ENCODE measurements at regions of chr4 and their contacts with region 1.

Region 1: DNA sequence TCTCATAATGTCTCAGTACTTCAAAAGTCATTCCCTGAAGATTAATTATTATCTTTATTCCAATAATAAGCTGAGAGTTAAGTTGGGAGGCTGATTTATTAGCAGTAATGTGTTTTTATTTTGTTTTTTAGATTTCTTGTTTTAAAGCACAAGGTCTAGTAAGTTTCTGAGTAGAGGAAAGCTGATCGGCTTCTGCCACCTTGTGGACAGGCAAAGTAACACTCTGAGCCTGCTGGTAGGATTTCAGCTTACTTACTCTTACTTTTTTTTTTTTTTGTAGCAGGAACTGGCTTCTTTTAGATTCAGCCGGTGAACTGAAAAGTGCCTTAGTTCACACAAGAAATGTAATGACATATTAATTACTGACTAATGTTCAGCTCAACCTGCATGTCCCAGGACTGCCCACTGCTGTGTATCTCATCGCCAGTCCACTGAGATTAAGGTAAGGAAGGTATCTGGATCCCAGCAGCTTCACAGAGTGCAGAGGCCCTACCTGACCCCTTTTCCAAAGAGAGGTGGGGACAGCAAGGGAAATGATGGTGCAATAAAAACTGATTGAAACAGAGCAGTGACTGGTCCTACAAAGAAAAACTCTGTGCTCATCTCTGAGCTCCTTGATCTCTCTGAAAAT is 126.5 kb downstream of the ADGRA3 start:
- DNase-seq: peak in 7 of 9 donors; percentile 24 to 58 (median 44)
- ATAC-seq: peak; percentile 55
- H3K4me3 ChIP-seq: no peak overlapping the region
- H3K4me3 Mint-ChIP-seq: no peak overlapping the region
- H3K27ac ChIP-seq: no peak overlapping the region
- H3K27ac Mint-ChIP-seq: peak overlapping the region in 1 of 9 donors; percentile 7
- H3K4me1 ChIP-seq: no peaks in the 10 kb centered on the region
- H3K4me1 Mint-ChIP-seq: peaks cover 0 to 4% (median 0%) of the 10 kb centered on the region in 7 donors
- H3K27me3 ChIP-seq: no peaks in the 10 kb centered on the region
- H3K27me3 Mint-ChIP-seq: no peaks in the 10 kb centered on the region

Region 2: GRCh38 chr4:21790438-21791029 is 598.8 kb before region 1 on chr4:
- CTCF ChIA-PET with region 1: interaction called, 16 read pairs
- POLR2A ChIA-PET with region 1: no interaction called
- intact Hi-C with region 1: loop called in 1 of 2 experiments (anchors 1 kb)
- DNase-seq: peak in 3 of 9 donors; percentile 5 to 13 (median 13)
- ATAC-seq: no peak
- H3K4me3 ChIP-seq: no peak overlapping the region
- H3K4me3 Mint-ChIP-seq: no peak overlapping the region
- H3K27ac ChIP-seq: no peak overlapping the region
- H3K27ac Mint-ChIP-seq: no peak overlapping the region
- H3K4me1 ChIP-seq: no peaks in the 10 kb centered on the region
- H3K4me1 Mint-ChIP-seq: peaks cover 0 to 2% (median 0%) of the 10 kb centered on the region in 7 donors
- H3K27me3 ChIP-seq: no peaks in the 10 kb centered on the region
- H3K27me3 Mint-ChIP-seq: peaks cover 0 to 4% (median 0%) of the 10 kb centered on the region in 5 donors

Region 3: GRCh38 chr4:22129454-22130029 is 259.8 kb before region 1 on chr4:
- CTCF ChIA-PET with region 1: no interaction called
- POLR2A ChIA-PET with region 1: no interaction called
- intact Hi-C with region 1: loop called in 1 of 2 experiments (anchors 1 kb)
- DNase-seq: no peak
- ATAC-seq: no peak
- H3K4me3 ChIP-seq: no peak overlapping the region
- H3K4me3 Mint-ChIP-seq: no peak overlapping the region
- H3K27ac ChIP-seq: no peak overlapping the region
- H3K27ac Mint-ChIP-seq: no peak overlapping the region
- H3K4me1 ChIP-seq: no peaks in the 10 kb centered on the region
- H3K4me1 Mint-ChIP-seq: no peaks in the 10 kb centered on the region
- H3K27me3 ChIP-seq: no peaks in the 10 kb centered on the region
- H3K27me3 Mint-ChIP-seq: no peaks in the 10 kb centered on the region

Region 4: GRCh38 chr4:22338796-22339195 is 50.6 kb before region 1 on chr4:
- CTCF ChIA-PET with region 1: no interaction called
- POLR2A ChIA-PET with region 1: no interaction called
- intact Hi-C with region 1: no loop called
- DNase-seq: no peak
- ATAC-seq: no peak
- H3K4me3 ChIP-seq: no peak overlapping the region
- H3K4me3 Mint-ChIP-seq: no peak overlapping the region
- H3K27ac ChIP-seq: no peak overlapping the region
- H3K27ac Mint-ChIP-seq: no peak overlapping the region
- H3K4me1 ChIP-seq: no peaks in the 10 kb centered on the region
- H3K4me1 Mint-ChIP-seq: no peaks in the 10 kb centered on the region
- H3K27me3 ChIP-seq: no peaks in the 10 kb centered on the region
- H3K27me3 Mint-ChIP-seq: no peaks in the 10 kb centered on the region

Region 5: GRCh38 chr4:22363787-22364186 is 25.6 kb before region 1 on chr4:
- CTCF ChIA-PET with region 1: no interaction called
- POLR2A ChIA-PET with region 1: no interaction called
- intact Hi-C with region 1: no loop called
- DNase-seq: no peak
- ATAC-seq: no peak
- H3K4me3 ChIP-seq: no peak overlapping the region
- H3K4me3 Mint-ChIP-seq: no peak overlapping the region
- H3K27ac ChIP-seq: no peak overlapping the region
- H3K27ac Mint-ChIP-seq: no peak overlapping the region
- H3K4me1 ChIP-seq: no peaks in the 10 kb centered on the region
- H3K4me1 Mint-ChIP-seq: no peaks in the 10 kb centered on the region
- H3K27me3 ChIP-seq: no peaks in the 10 kb centered on the region
- H3K27me3 Mint-ChIP-seq: peaks cover 0 to 5% (median 0%) of the 10 kb centered on the region in 5 donors

Measured in naive thymus-derived CD4-positive, alpha-beta T cell (primary cell).